PC-9 (cell line): ENCODE measurements at regions of chr1 and their contacts with region 1.

Region 1: GRCh38 chr1:179293340-179294327 is at the start of gene SOAT1:
- DNase-seq: peak; percentile 74 to 95
- H3K4me3 ChIP-seq: peak within 1 kb of the TSS; percentile 89
- H3K27ac ChIP-seq: peak within 1 kb of the TSS; percentile 75
- H3K4me1 ChIP-seq: peaks cover 21% of the 10 kb centered on the region
- H3K27me3 ChIP-seq: no peaks in the 10 kb centered on the region
- CTCF ChIP-seq: no peak
- total RNA-seq, gene SOAT1: 26.2 and 43.5 TPM in 2 replicates

Region 2: GRCh38 chr1:178808529-178808928 is 485.1 kb before region 1 on chr1:
- CTCF ChIA-PET with region 1: no interaction called
- POLR2A ChIA-PET with region 1: no interaction called
- intact Hi-C with region 1: no loop called
- DNase-seq: no peak
- H3K4me3 ChIP-seq: no peak overlapping the region
- H3K27ac ChIP-seq: no peak overlapping the region
- H3K4me1 ChIP-seq: no peaks in the 10 kb centered on the region
- H3K27me3 ChIP-seq: no peaks in the 10 kb centered on the region
- CTCF ChIP-seq: no peak

Region 3: GRCh38 chr1:179025125-179025974 is 268.3 kb before region 1 on chr1 and contains the start of gene FAM20B:
- CTCF ChIA-PET with region 1: no interaction called
- POLR2A ChIA-PET with region 1: no interaction called
- intact Hi-C with region 1: loop called (anchors 5 kb)
- DNase-seq: peak; percentile 81 to 94
- H3K4me3 ChIP-seq: peak within 1 kb of the TSS; percentile 93
- H3K27ac ChIP-seq: peak within 1 kb of the TSS; percentile 98
- H3K4me1 ChIP-seq: peaks cover 37% of the 10 kb centered on the region
- H3K27me3 ChIP-seq: no peaks in the 10 kb centered on the region
- CTCF ChIP-seq: no peak
- total RNA-seq, gene FAM20B: 68.1 and 80.5 TPM in 2 replicates

Region 4: DNA sequence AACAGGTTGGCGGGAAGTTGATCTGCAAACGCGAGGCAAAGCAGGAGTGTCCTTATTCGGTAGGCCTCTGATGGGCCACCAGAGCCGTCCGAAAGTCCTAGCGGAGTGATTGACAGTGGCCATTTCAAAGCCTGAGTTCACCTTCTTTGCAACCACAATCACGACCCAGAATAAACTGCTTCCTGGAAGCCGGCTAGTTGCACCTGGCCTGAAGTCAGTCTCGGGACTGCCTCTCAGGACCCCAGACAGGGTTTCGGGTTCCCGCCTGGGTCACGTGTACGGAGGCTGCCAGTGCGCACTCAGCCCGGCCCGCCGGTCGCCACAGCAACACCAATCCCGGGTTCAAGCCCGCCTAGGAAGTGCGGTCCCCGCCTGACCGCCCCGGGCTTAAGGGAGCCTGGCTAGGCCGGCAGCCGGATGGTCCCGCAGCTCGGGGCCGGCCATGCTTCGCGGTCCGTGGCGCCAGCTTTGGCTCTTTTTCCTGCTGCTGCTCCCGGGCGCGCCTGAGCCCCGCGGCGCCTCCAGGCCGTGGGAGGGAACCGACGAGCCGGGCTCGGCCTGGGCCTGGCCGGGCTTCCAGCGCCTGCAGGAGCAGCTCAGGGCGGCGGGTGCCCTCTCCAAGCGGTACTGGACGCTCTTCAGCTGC is 211.8 kb before region 1 on chr1 and contains the start of gene TOR3A:
- CTCF ChIA-PET with region 1: interaction called, 3 read pairs
- POLR2A ChIA-PET with region 1: interaction called, 3 read pairs
- intact Hi-C with region 1: loop called (anchors 2 kb)
- DNase-seq: peak; percentile 87 to 96
- H3K4me3 ChIP-seq: peak within 1 kb of the TSS; percentile 79
- H3K27ac ChIP-seq: peak within 1 kb of the TSS; percentile 76
- H3K4me1 ChIP-seq: peaks cover 28% of the 10 kb centered on the region
- H3K27me3 ChIP-seq: no peaks in the 10 kb centered on the region
- CTCF ChIP-seq: no peak
- total RNA-seq, gene TOR3A: 31.6 and 35.6 TPM in 2 replicates

Region 5: GRCh38 chr1:179121159-179121938 is 172.3 kb before region 1 on chr1:
- CTCF ChIA-PET with region 1: no interaction called
- POLR2A ChIA-PET with region 1: interaction called, 4 read pairs
- intact Hi-C with region 1: loop called (anchors 1 kb)
- DNase-seq: peak; percentile 15 to 40
- H3K4me3 ChIP-seq: no peak overlapping the region
- H3K27ac ChIP-seq: no peak overlapping the region
- H3K4me1 ChIP-seq: no peaks in the 10 kb centered on the region; the same call in 1 of the 2 replicates
- H3K27me3 ChIP-seq: no peaks in the 10 kb centered on the region
- CTCF ChIP-seq: peak; percentile 78

Region 6: GRCh38 chr1:179175011-179175841 is 118.4 kb before region 1 on chr1:
- CTCF ChIA-PET with region 1: no interaction called
- POLR2A ChIA-PET with region 1: interaction called, 14 read pairs
- intact Hi-C with region 1: no loop called
- DNase-seq: peak in 1 of 2 experiments; percentile 64
- H3K4me3 ChIP-seq: no peak overlapping the region
- H3K27ac ChIP-seq: peak overlapping the region; percentile 65
- H3K4me1 ChIP-seq: peaks cover 18% of the 10 kb centered on the region; the same call in 1 of the 2 replicates
- H3K27me3 ChIP-seq: no peaks in the 10 kb centered on the region
- CTCF ChIP-seq: no peak

Region 7: GRCh38 chr1:179229214-179230140 is 64.2 kb before region 1 on chr1 and contains the start of gene ABL2:
- CTCF ChIA-PET with region 1: no interaction called
- POLR2A ChIA-PET with region 1: no interaction called
- intact Hi-C with region 1: loop called (anchors 5 kb)
- DNase-seq: peak; percentile 39
- H3K4me3 ChIP-seq: peak within 1 kb of the TSS; percentile 96
- H3K27ac ChIP-seq: peak within 1 kb of the TSS; percentile 55
- H3K4me1 ChIP-seq: peaks cover 36% of the 10 kb centered on the region
- H3K27me3 ChIP-seq: no peaks in the 10 kb centered on the region
- CTCF ChIP-seq: no peak
- total RNA-seq, gene ABL2: 23.5 and 27.4 TPM in 2 replicates

Region 8: GRCh38 chr1:179264506-179264905 is 29.1 kb before region 1 on chr1:
- CTCF ChIA-PET with region 1: no interaction called
- POLR2A ChIA-PET with region 1: no interaction called
- intact Hi-C with region 1: no loop called
- DNase-seq: no peak
- H3K4me3 ChIP-seq: no peak overlapping the region
- H3K27ac ChIP-seq: no peak overlapping the region
- H3K4me1 ChIP-seq: no peaks in the 10 kb centered on the region
- H3K27me3 ChIP-seq: no peaks in the 10 kb centered on the region
- CTCF ChIP-seq: no peak

Region 9: DNA sequence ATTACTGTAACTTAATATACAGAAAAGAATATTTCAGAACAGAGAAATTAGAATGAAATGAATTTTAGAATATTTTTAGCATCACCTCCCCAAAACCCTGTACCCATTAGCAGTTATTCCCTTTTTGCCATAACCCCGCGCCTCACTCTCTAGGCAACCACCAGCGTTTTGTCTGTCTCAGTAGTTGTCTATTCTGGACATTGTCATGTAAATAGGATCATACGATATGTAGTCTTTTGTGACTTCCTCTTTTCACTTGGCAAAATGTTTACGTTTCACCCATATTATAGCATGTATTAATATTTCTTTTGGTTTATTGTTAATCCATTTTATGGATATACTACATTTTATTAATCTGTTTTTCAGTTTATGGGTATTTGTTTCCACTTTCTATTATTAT is 24.9 kb after region 1 on chr1:
- CTCF ChIA-PET with region 1: no interaction called
- POLR2A ChIA-PET with region 1: interaction called, 12 read pairs
- intact Hi-C with region 1: no loop called
- DNase-seq: no peak
- H3K4me3 ChIP-seq: no peak overlapping the region
- H3K27ac ChIP-seq: no peak overlapping the region
- H3K4me1 ChIP-seq: no peaks in the 10 kb centered on the region
- H3K27me3 ChIP-seq: no peaks in the 10 kb centered on the region
- CTCF ChIP-seq: no peak

Region 10: GRCh38 chr1:179329862-179330261 is 36.2 kb after region 1 on chr1:
- CTCF ChIA-PET with region 1: no interaction called
- POLR2A ChIA-PET with region 1: no interaction called
- intact Hi-C with region 1: no loop called
- DNase-seq: no peak
- H3K4me3 ChIP-seq: no peak overlapping the region
- H3K27ac ChIP-seq: no peak overlapping the region
- H3K4me1 ChIP-seq: no peaks in the 10 kb centered on the region
- H3K27me3 ChIP-seq: no peaks in the 10 kb centered on the region
- CTCF ChIP-seq: no peak